H1 (cell line): ENCODE measurements at regions of chr19 and their contacts with region 1.

Region 1: DNA sequence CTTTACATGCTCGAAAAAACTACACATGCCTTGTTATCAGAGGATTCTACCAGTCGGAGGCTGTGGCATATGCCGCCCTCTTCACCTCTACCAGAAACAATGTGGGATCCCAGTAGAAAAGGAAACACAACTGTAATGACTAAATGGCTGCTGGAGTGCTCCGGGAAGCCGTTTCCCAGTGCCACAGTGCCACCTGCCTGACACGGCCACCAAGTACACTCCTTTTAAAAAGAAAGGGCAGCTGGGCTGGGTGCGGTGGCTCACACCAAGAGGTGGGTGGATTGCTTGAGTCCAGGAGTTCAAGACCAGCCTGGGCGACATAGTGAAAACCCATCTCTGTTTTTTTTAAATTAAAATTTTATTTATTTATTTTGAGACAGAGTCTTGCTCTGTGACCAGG is 67.3 kb downstream of the TRPM4 start:
- DNase-seq: peak; percentile 56 to 78
- H3K4me3 ChIP-seq: no peak overlapping the region
- H3K27ac ChIP-seq: no peak overlapping the region
- H3K4me1 ChIP-seq: no peaks in the 10 kb centered on the region; a peak in 1 of 7 replicates
- H3K27me3 ChIP-seq: no peaks in the 10 kb centered on the region
- CTCF ChIP-seq: peak; percentile 71 to 76 (median 73)
- EP300 ChIP-seq: no peak
- POLR2A ChIP-seq: no peak
- RAD21 ChIP-seq: peak; percentile 82 to 88

Region 2: DNA sequence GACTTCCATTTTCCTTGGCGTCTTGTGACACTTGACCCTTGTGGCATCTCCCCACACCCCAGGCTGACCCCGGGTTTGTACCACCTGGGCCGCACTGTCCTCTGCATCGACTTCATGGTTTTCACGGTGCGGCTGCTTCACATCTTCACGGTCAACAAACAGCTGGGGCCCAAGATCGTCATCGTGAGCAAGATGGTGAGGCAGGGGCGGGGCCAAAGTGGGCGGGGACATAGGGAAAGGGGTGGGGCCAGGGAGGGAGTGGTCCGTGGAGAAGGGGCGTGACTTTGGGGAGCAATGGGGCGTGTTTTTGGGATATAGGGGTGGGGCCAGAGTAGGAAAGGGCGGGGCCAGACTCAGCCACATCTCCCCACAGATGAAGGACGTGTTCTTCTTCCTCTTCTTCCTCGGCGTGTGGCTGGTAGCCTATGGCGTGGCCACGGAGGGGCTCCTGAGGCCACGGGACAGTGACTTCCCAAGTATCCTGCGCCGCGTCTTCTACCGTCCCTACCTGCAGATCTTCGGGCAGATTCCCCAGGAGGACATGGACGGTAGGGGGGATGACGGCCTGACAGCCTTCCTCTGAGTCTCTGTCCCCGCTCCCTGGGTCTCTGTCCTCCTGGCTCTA is 24.5 kb before region 1 on chr19:
- CTCF ChIA-PET with region 1: interaction called, 12 read pairs
- POLR2A ChIA-PET with region 1: no interaction called
- DNase-seq: no peak
- H3K4me3 ChIP-seq: no peak overlapping the region
- H3K27ac ChIP-seq: no peak overlapping the region
- H3K4me1 ChIP-seq: no peaks in the 10 kb centered on the region
- H3K27me3 ChIP-seq: no peaks in the 10 kb centered on the region
- CTCF ChIP-seq: no peak
- EP300 ChIP-seq: no peak
- POLR2A ChIP-seq: no peak
- RAD21 ChIP-seq: no peak

Region 3: GRCh38 chr19:49243129-49243528 is 18.3 kb after region 1 on chr19:
- CTCF ChIA-PET with region 1: interaction called, 19 read pairs
- POLR2A ChIA-PET with region 1: no interaction called
- DNase-seq: no peak
- H3K4me3 ChIP-seq: no peak overlapping the region
- H3K27ac ChIP-seq: no peak overlapping the region
- H3K4me1 ChIP-seq: peaks cover 0 to 3% (median 1%) of the 10 kb centered on the region in 4 experiments; a peak in 2 of 7 replicates
- H3K27me3 ChIP-seq: no peaks in the 10 kb centered on the region
- CTCF ChIP-seq: no peak
- EP300 ChIP-seq: no peak
- POLR2A ChIP-seq: no peak
- RAD21 ChIP-seq: no peak

Region 4: GRCh38 chr19:49301165-49301865 is 76.5 kb after region 1 on chr19:
- CTCF ChIA-PET with region 1: interaction called, 14 read pairs
- POLR2A ChIA-PET with region 1: no interaction called
- DNase-seq: peak; percentile 50 to 95
- H3K4me3 ChIP-seq: no peak overlapping the region
- H3K27ac ChIP-seq: no peak overlapping the region
- H3K4me1 ChIP-seq: no peaks in the 10 kb centered on the region; a peak in 2 of 7 replicates
- H3K27me3 ChIP-seq: no peaks in the 10 kb centered on the region
- CTCF ChIP-seq: peak; percentile 85 to 98 (median 97)
- EP300 ChIP-seq: no peak
- POLR2A ChIP-seq: no peak
- RAD21 ChIP-seq: peak; percentile 62 to 73

Region 5: DNA sequence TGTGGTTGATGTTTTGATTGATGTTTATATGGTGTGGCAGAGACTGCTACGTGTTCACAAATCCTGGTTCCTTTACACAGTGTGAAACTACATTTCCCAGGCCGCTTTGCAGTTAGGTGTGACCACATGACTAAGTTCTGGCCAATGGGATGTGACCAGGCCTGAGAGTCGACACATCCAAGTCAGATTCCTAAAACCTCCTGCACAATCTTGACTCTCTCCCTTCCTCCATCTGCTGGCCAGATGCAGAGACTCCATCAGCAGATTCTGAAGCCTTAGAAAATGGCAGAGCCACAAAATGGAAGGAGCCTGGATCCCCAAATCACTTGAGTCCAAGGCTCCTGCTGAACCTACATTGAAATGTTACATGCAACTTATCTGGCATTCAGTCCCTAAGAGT is 123.0 kb after region 1 on chr19:
- CTCF ChIA-PET with region 1: interaction called, 13 read pairs
- POLR2A ChIA-PET with region 1: no interaction called
- DNase-seq: no peak
- H3K4me3 ChIP-seq: no peak overlapping the region
- H3K27ac ChIP-seq: no peak overlapping the region
- H3K4me1 ChIP-seq: no peaks in the 10 kb centered on the region
- H3K27me3 ChIP-seq: no peaks in the 10 kb centered on the region
- CTCF ChIP-seq: peak in 2 of 3 experiments; percentile 38 to 49; a peak in 3 of 4 replicates
- EP300 ChIP-seq: no peak
- POLR2A ChIP-seq: no peak
- RAD21 ChIP-seq: peak in 1 of 2 experiments; percentile 38; a peak in 2 of 4 replicates

Region 6: DNA sequence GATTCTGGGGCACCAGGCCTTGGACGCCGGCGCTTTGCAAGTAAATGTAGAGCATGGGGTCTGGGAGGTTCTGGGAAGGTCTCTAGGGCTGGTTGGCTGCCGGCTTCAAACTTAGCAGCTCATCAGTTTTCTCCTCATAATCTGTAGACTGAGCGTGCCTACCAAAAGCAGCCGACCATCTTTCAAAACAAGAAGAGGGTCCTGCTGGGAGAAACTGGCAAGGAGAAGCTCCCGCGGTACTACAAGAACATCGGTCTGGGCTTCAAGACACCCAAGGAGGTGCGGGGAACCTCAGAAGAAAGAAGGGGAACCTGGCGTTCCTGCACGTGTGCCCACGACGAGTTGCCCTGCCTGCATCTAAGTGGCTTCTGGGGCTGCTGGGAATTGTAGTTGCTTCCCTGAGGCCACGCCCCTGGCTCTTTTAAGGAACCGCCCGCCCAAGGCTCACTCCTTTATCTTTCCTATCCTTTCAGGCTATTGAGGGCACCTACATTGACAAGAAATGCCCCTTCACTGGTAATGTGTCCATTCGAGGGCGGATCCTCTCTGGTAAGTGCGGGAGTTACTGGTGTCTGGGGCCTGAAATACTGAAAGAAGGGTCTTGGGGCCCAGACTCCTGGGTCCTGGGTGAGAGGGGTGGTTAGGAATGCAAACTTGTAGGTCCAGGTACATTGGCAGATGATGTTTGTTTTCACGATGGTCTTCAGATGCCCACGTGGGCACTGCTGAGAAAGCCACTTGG is 272.4 kb after region 1 on chr19:
- CTCF ChIA-PET with region 1: no interaction called
- POLR2A ChIA-PET with region 1: no interaction called
- DNase-seq: no peak
- H3K4me3 ChIP-seq: peak overlapping the region; percentile 91 to 99 (median 98)
- H3K27ac ChIP-seq: peak overlapping the region; percentile 85
- H3K4me1 ChIP-seq: peaks cover 0 to 32% (median 23%) of the 10 kb centered on the region in 4 experiments; a peak in 6 of 7 replicates
- H3K27me3 ChIP-seq: no peaks in the 10 kb centered on the region
- CTCF ChIP-seq: no peak
- EP300 ChIP-seq: no peak
- POLR2A ChIP-seq: peak in 1 of 2 experiments; percentile 77; a peak in 2 of 3 replicates
- RAD21 ChIP-seq: no peak